ENCODE measurements at regions of chrX and their contacts with region 1.

Region 1: GRCh38 chrX:55488593-55489313 is 895 bp downstream of the USP51 start:
- DNase-seq: peak; percentile 61
- ATAC-seq: peak; percentile 74
- H3K4me3 Mint-ChIP-seq: peak overlapping the region; percentile 94
- H3K27ac Mint-ChIP-seq: peak overlapping the region; percentile 98
- H3K4me1 Mint-ChIP-seq: peaks cover 17% of the 10 kb centered on the region
- H3K27me3 Mint-ChIP-seq: no peaks in the 10 kb centered on the region
- CTCF ChIP-seq: no peak

Region 2: DNA sequence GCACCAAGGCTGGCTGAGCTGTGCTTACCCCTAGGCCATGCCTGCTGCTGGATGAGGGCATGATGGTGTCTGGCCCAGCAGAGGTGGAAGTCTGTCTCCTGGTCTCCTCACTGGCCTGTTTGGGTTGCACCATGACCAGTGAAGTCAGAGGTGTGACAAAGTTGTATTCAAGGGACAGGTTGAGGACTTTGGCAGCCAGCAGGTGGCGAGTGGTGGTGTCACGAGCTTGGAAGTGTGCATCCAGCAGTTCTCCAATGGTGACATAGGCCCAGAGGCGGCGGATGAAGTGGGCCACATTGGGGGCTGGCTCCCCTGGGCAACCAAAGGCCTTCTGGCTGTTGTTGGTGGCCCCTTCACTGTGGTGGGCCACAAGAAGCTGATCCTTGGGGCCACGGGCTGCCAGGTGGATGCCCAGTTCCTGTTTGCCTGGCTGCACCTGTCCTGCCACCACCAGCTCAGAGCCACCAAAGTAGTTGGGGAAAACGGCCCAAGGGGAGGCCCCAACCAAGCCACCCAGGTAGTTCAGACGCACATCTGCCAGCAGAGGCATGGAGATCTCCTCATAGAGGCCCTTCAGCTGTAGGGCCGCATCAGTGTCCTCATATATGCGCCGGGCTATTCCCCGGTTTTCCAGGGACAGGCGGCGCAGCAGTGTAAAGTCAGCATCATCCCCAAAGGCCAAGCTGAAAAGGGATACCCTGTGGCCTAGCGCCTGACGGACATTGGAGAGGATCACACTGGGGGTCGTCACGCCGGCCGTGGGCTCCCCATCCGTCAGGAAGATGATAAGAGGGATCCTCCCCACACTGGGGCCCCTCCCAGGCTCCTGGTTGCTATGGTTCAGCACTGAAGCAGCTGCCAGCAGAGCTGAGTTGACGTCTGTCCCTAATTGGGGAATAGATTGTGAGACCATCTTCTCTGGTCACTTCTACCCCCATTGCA is 730.4 kb before region 1 on chrX:
- CTCF ChIA-PET with region 1: no interaction called
- POLR2A ChIA-PET with region 1: no interaction called
- intact Hi-C with region 1: no loop called
- DNase-seq: no peak
- ATAC-seq: no peak
- H3K4me3 Mint-ChIP-seq: no peak overlapping the region
- H3K27ac Mint-ChIP-seq: no peak overlapping the region
- H3K4me1 Mint-ChIP-seq: no peaks in the 10 kb centered on the region
- H3K27me3 Mint-ChIP-seq: peaks cover 9% of the 10 kb centered on the region
- CTCF ChIP-seq: no peak

Region 3: GRCh38 chrX:55379396-55379795 is 109.4 kb before region 1 on chrX:
- CTCF ChIA-PET with region 1: no interaction called
- POLR2A ChIA-PET with region 1: no interaction called
- intact Hi-C with region 1: no loop called
- DNase-seq: no peak
- ATAC-seq: no peak
- H3K4me3 Mint-ChIP-seq: no peak overlapping the region
- H3K27ac Mint-ChIP-seq: no peak overlapping the region
- H3K4me1 Mint-ChIP-seq: no peaks in the 10 kb centered on the region
- H3K27me3 Mint-ChIP-seq: peaks cover 6% of the 10 kb centered on the region
- CTCF ChIP-seq: no peak

Region 4: DNA sequence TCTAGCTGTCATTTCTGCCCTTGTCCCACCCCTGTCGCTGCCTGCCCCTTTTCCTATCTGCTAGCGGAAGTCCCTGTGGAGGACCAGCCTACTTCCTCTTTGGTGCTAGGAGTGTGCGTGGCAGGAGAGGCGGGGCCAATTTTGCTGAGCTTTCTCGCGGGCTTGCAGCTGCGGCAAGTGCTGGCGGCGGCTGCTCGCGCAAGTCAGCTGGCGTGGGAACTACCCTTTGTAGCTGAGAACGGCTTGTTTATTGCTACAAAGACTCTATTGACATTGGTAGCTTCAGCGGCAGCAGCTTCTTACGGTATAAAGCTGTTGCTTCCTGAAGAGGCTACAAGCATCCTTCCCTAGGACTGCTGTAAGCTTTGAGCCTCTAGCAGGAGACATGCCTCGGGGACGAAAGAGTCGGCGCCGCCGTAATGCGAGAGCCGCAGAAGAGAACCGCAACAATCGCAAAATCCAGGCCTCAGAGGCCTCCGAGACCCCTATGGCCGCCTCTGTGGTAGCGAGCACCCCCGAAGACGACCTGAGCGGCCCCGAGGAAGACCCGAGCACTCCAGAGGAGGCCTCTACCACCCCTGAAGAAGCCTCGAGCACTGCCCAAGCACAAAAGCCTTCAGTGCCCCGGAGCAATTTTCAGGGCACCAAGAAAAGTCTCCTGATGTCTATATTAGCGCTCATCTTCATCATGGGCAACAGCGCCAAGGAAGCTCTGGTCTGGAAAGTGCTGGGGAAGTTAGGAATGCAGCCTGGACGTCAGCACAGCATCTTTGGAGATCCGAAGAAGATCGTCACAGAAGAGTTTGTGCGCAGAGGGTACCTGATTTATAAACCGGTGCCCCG is 36.5 kb before region 1 on chrX and contains the start of gene MAGEH1:
- CTCF ChIA-PET with region 1: interaction called, 10 read pairs
- POLR2A ChIA-PET with region 1: interaction called, 18 read pairs
- intact Hi-C with region 1: no loop called
- DNase-seq: peak; percentile 58
- ATAC-seq: peak; percentile 92
- H3K4me3 Mint-ChIP-seq: peak within 1 kb of the TSS; percentile 89
- H3K27ac Mint-ChIP-seq: peak within 1 kb of the TSS; percentile 79
- H3K4me1 Mint-ChIP-seq: peaks cover 13% of the 10 kb centered on the region
- H3K27me3 Mint-ChIP-seq: no peaks in the 10 kb centered on the region
- CTCF ChIP-seq: no peak
- total RNA-seq, gene MAGEH1: 8.4 and 9.8 TPM in 2 replicates

Region 5: GRCh38 chrX:55524487-55524886 is 35.7 kb after region 1 on chrX:
- CTCF ChIA-PET with region 1: no interaction called
- POLR2A ChIA-PET with region 1: no interaction called
- intact Hi-C with region 1: no loop called
- DNase-seq: no peak
- ATAC-seq: no peak
- H3K4me3 Mint-ChIP-seq: no peak overlapping the region
- H3K27ac Mint-ChIP-seq: no peak overlapping the region
- H3K4me1 Mint-ChIP-seq: no peaks in the 10 kb centered on the region
- H3K27me3 Mint-ChIP-seq: peaks cover 3% of the 10 kb centered on the region
- CTCF ChIP-seq: no peak